ENCODE measurements at regions of chr1 and their contacts with region 1.

Region 1: GRCh38 chr1:160777486-160778089 is 18.4 kb upstream of the LY9 start:
- DNase-seq: peak; percentile 64
- H3K4me3 Mint-ChIP-seq: no peak overlapping the region
- H3K27ac Mint-ChIP-seq: peak overlapping the region; percentile 5
- H3K4me1 Mint-ChIP-seq: peaks cover 41% of the 10 kb centered on the region
- H3K27me3 Mint-ChIP-seq: no peaks in the 10 kb centered on the region

Region 2: GRCh38 chr1:160653620-160654016 is 124.0 kb before region 1 on chr1:
- CTCF ChIA-PET with region 1: no interaction called
- DNase-seq: no peak
- H3K4me3 Mint-ChIP-seq: no peak overlapping the region
- H3K27ac Mint-ChIP-seq: no peak overlapping the region
- H3K4me1 Mint-ChIP-seq: peaks cover 74% of the 10 kb centered on the region
- H3K27me3 Mint-ChIP-seq: no peaks in the 10 kb centered on the region

Region 3: GRCh38 chr1:160681067-160681890 is 96.3 kb before region 1 on chr1:
- CTCF ChIA-PET with region 1: interaction called, 104 read pairs
- DNase-seq: peak; percentile 93
- H3K4me3 Mint-ChIP-seq: no peak overlapping the region
- H3K27ac Mint-ChIP-seq: peak overlapping the region; percentile 96
- H3K4me1 Mint-ChIP-seq: peaks cover 74% of the 10 kb centered on the region
- H3K27me3 Mint-ChIP-seq: no peaks in the 10 kb centered on the region

Region 4: DNA sequence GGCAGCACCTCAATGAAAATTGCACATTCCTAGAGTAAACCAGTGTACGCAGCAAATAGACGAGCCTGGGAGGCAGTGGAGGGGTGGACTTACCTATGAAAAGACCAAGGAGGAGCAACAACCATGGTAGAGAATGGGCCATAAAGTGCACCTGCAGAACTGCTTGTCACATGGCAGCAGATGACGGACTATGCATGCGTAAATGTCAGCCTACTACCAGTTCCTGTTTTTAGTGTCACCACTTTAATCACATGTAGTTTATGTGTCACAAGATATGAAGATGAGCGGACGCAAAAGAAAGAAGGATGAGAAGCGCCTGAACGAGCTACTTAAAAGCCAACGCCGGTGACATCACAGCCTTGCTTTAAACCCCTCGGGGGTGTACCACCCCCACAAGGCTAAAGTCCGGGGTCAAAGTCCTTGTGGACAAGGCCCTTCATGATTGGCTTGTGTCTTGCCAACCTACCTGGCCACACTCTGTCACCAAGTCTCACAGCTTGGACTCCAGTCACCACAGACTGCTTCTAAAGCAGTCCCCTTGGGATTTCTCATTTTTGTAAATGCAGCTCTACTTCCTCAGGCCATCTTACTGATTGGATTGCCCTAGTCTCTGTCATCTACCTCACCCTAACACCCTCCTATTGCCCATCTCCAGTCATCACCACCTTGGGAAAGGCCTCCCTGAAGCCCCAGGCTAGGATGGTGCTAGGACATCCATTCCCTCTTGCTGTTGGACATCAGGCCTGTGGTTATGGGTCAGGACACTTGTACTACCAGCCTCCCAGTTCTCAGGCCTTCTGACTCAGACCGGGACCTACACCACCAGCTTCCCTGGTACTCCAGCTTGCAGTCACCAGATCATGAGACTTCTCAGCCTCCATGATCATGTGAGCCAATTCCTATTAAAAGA is 12.4 kb after region 1 on chr1:
- CTCF ChIA-PET with region 1: interaction called, 50 read pairs
- DNase-seq: no peak
- H3K4me3 Mint-ChIP-seq: no peak overlapping the region
- H3K27ac Mint-ChIP-seq: no peak overlapping the region
- H3K4me1 Mint-ChIP-seq: peaks cover 13% of the 10 kb centered on the region
- H3K27me3 Mint-ChIP-seq: no peaks in the 10 kb centered on the region

Region 5: DNA sequence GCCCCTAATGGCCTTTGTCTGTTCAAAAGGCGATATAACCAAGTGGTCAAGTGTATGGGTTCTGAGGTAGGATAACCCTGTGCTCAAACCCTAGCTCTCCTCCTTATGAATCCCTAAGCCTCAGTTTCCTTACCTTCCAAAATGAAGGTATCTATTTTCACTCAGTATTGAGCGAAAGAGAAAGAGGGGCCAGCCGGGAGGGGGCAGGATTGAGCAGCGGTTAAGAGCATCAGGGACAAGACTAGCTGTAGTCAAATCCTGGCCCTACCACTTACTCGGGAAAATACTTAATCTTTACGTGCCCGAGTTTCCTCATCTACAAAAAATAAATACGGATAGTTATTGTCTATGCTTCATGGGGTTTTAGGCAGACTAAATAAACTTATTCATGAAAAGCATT is 44.0 kb after region 1 on chr1:
- CTCF ChIA-PET with region 1: interaction called, 157 read pairs
- DNase-seq: no peak
- H3K4me3 Mint-ChIP-seq: no peak overlapping the region
- H3K27ac Mint-ChIP-seq: no peak overlapping the region
- H3K4me1 Mint-ChIP-seq: peaks cover 2% of the 10 kb centered on the region
- H3K27me3 Mint-ChIP-seq: no peaks in the 10 kb centered on the region

Region 6: DNA sequence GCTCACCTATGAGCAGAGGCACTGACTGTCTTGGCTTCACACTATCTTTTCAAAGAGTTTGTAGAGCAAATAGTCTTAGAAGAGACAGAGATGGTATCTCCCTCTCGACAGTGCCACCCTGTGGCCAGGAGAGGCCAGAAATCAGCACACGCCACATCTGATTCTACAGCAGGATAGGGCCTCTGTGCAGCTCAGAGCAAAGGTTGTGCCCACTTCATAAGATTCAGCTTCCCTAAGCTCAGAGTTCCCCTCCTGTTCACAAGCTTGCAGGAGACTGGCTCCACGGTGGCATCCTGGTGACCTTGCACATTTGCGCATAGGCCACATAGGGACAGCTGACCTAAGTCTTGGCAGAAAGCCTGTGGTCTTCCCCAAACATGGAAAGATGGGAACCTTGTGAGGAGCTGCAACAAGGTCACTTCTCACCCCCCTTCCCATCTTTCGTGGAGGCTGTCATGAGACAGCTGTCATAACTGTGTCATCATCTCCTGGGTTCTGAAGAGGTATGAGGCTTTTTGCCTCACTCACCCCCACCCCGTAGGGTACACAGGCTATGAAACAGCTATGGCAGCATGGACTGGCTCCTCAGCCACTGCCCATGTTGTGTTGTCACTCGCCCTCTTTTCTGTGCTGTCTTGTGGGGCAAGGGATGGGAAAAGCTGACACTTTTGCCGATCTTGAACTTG is 174.0 kb after region 1 on chr1:
- CTCF ChIA-PET with region 1: interaction called, 98 read pairs
- DNase-seq: peak; percentile 86
- H3K4me3 Mint-ChIP-seq: no peak overlapping the region
- H3K27ac Mint-ChIP-seq: no peak overlapping the region
- H3K4me1 Mint-ChIP-seq: peaks cover 13% of the 10 kb centered on the region
- H3K27me3 Mint-ChIP-seq: peaks cover 10% of the 10 kb centered on the region

Measured in activated naive CD4-positive, alpha-beta T cell treated with anti-CD3 and anti-CD28 coated beads, Interleukin-2, amount 10 ng/mL, durations not matched to agents 7 days and 5 days (primary cell).